Ovary (tissue), 10 donors: ENCODE measurements at regions of chr12 and their contacts with region 1.

Region 1: DNA sequence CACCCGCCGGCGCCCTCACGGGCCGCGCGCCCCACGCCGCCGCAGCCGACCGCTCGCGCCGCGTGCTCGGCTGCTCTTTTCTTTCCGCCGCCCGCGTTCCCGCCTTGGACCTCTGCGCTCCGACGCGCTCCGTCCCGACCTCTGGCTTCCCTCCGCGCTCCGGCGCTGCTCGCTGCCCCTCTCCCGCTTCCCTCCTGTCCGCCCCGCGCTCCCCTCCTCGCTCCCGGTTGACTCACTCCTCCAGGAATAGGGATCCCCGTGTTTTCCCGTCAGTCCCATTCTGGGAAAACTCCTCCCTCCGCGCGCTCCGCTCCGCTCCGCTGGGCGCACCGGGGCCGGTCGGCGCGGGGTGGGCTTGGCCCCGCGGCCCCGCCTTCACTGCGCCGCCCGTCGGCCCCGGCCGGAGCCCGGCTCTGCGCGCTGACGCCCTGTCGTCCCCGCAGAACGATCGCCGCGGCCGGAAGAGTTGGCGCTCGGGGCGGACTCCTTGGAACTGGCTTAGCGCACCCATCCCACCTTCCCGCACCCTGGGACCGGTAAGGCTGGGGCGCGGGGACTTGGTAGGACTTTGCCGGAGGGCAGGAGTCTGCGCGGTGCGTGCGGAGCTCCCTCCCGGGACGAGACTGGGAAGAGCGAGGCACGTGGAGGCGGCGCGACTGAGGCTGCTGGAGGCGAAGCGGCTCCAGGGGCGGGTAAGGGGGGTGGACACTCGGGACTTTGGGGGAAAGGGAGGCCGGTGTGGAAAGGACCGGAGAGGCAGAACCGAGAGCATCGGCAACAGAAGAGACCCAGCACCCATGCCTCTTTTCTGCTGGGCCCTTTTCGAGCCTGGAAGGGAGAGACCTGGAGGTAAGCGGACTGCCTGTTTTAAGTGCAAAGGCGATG is 550 bp downstream of the TEAD4 start:
- DNase-seq: peak; percentile 38 to 65 (median 61)
- H3K4me3 ChIP-seq: peak overlapping the region; percentile 60
- H3K27ac ChIP-seq: no peak overlapping the region
- H3K4me1 ChIP-seq: peaks cover 5% of the 10 kb centered on the region
- H3K27me3 ChIP-seq: no peaks in the 10 kb centered on the region
- CTCF ChIP-seq: no peak
- EP300 ChIP-seq: no peak
- POLR2A ChIP-seq: peak; percentile 25

Region 2: GRCh38 chr12:2902272-2902880 is 57.4 kb before region 1 on chr12:
- intact Hi-C with region 1: loop called in 1 of 4 experiments (anchors 10 kb)
- DNase-seq: peak in 3 of 5 donors; percentile 26 to 52 (median 50)
- H3K4me3 ChIP-seq: no peak overlapping the region
- H3K27ac ChIP-seq: peak overlapping the region in 1 of 2 donors; percentile 7
- H3K4me1 ChIP-seq: peaks cover 11% of the 10 kb centered on the region
- H3K27me3 ChIP-seq: no peaks in the 10 kb centered on the region
- CTCF ChIP-seq: no peak
- EP300 ChIP-seq: no peak
- POLR2A ChIP-seq: no peak

Region 3: DNA sequence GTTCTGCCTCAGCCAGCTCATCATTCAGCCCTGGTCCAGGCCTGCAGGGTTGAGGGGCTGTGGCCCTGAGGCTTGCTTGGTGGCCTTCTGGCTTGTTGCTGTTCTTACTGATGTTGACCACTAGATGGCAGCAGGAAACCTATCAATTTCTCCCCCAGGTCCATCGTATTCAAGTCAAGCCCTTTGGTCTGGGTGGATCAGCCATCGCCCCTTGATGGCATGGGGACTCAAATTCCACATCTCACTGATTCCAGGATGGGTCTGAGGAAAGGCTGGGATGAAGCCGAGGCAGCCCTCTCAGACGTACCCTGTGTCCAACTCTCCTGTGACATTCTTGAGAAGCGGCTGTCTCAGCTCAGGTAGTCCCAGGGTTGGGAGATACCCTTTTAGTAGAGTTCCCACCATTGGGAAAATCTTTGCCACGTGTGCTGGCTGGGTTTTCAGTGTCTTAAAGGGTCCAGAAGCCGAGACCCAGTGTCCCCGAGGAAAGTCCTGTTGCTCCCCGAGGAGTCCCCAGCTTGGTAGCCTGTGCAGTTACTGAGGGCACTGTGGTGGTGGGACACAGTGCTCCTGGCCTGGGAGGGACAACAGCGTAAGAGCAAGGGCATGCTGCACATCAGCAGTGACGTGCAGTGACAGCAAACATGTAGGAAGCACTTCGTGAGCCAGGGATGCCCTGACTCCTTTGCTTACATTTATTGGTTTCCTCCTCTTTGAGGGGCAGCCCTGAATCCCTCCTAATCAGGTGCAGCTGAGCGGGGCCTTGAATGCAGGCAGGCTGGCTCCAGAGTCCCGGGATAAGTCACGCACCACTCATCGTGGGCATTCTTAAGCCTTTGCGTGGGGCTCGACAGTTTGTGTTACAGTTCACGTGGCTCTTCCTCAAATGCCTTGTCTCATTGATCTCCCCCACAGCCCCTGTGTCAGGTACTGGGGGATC is 176.0 kb after region 1 on chr12:
- intact Hi-C with region 1: no loop called
- DNase-seq: peak in 3 of 5 donors; percentile 44 to 59 (median 57)
- H3K4me3 ChIP-seq: no peak overlapping the region
- H3K27ac ChIP-seq: no peak overlapping the region
- H3K4me1 ChIP-seq: peaks cover 29% of the 10 kb centered on the region
- H3K27me3 ChIP-seq: no peaks in the 10 kb centered on the region
- CTCF ChIP-seq: peak; percentile 63 to 82 (median 78)
- EP300 ChIP-seq: no peak
- POLR2A ChIP-seq: no peak

Region 4: DNA sequence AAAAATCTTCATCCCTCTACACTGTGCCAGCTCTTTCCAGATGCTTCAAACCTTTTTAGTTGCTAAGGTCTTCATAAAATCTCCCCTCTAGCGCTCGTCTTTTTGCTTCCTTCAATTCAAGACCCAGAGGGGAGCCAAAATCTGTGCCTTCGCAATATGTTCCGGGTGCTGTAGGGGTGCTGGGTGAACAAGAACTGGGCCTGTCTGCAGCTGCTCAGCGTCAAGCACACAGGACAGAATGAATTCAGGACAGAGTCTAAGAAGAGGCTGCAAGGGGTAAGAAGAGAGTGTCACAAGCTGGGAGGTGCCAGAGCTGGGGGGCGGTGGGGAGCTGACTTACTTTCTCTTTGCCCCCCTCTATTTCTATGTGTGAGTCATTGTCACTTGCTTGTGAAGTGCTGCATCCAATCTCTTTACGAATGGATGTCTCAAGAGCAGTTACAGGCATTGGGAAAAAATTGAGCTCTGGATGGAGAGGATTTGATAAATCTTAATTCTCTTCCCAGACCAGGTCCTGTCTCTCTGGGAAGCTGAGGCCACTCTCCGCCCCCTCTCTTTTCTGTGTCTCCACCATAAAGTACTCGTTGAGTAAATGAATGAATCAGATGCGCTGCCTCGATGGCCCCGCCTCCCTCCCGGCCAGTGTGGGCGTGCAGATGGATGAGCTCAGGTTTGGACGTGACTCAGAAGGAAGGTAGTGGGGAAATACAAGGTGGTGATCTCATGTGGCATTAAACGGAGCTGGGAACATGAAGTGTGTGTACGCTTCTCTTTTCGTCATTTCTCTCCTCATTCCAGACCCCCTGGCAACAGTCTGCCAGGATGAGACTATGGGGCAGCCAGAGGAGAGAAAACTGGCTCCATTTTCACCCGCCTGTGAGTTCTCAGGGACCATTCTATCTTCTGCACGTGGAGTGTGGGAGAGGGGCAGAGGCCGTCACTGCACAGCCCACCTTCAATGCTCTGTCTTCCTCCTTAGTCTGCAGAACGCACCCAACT is 208.8 kb after region 1 on chr12:
- intact Hi-C with region 1: no loop called
- DNase-seq: no peak
- H3K4me3 ChIP-seq: no peak overlapping the region
- H3K27ac ChIP-seq: no peak overlapping the region
- H3K4me1 ChIP-seq: peaks cover 15% of the 10 kb centered on the region
- H3K27me3 ChIP-seq: no peaks in the 10 kb centered on the region
- CTCF ChIP-seq: no peak
- EP300 ChIP-seq: no peak
- POLR2A ChIP-seq: no peak

Region 5: GRCh38 chr12:3319723-3320492 is 360.2 kb after region 1 on chr12:
- intact Hi-C with region 1: no loop called
- DNase-seq: no peak
- H3K4me3 ChIP-seq: no peak overlapping the region
- H3K27ac ChIP-seq: no peak overlapping the region
- H3K4me1 ChIP-seq: peaks cover 3% of the 10 kb centered on the region
- H3K27me3 ChIP-seq: no peaks in the 10 kb centered on the region
- CTCF ChIP-seq: no peak
- EP300 ChIP-seq: no peak
- POLR2A ChIP-seq: no peak